ENCODE measurements at regions of chr14 and their contacts with region 1.

Region 1: DNA sequence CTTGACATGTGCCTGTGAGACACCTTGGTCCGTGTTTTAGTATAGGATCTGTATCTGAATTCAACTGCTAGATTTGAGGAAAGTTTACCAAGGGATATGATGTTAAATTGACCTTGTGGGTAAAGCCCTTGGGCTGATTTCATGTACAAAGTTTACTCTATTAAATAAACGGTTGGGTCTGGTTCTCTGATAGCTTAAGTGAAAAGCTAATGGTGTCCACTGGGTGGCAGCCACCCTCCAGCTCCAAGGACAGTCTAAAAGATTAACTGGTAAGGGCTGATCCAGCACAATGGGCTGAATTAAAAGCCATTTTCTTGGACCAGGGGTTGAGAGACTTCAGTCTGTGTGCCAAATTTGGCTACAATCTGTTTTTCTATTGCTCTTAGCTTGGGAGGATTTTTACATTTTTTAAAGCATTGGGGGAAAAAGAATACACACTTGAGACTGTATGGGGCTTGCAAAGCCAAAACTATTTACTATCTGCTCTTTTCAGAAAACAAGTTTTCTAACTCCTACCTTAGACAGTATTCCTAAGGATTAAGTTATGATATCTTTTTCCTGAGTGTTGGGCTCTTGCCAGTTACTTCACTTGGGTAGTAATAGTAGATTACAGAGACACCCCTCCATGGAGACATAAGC is 116.5 kb downstream of the GPHN start:
- DNase-seq: peak; percentile 42
- H3K4me3 ChIP-seq: no peak overlapping the region
- H3K27ac ChIP-seq: no peak overlapping the region
- H3K27me3 ChIP-seq: no peaks in the 10 kb centered on the region
- CTCF ChIP-seq: peak; percentile 80

Region 2: GRCh38 chr14:66638689-66639088 is 14.3 kb after region 1 on chr14:
- CTCF ChIA-PET with region 1: interaction called, 18 read pairs
- POLR2A ChIA-PET with region 1: no interaction called
- DNase-seq: no peak
- H3K4me3 ChIP-seq: no peak overlapping the region
- H3K27ac ChIP-seq: no peak overlapping the region
- H3K27me3 ChIP-seq: no peaks in the 10 kb centered on the region
- CTCF ChIP-seq: no peak

Region 3: DNA sequence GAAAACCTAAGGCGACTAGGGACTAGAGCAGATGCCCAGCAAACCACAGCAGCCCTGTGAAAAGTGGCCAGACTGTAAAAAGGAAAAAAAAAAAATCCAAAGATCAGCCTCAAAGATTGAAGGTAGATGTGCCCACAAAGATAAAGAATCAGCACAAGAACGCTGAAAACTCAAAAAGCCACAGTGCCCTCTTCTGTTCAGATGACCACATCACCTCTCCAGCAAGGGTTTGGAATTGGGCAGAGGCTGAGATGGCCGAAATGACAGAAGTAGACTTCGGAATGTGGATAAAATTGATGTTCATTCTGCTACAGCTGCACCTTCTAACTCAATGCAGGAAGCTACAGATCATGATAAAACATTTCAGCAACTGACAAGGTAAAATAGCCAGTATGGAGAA is 38.0 kb after region 1 on chr14:
- CTCF ChIA-PET with region 1: interaction called, 37 read pairs
- POLR2A ChIA-PET with region 1: no interaction called
- DNase-seq: no peak
- H3K4me3 ChIP-seq: no peak overlapping the region
- H3K27ac ChIP-seq: no peak overlapping the region
- H3K27me3 ChIP-seq: no peaks in the 10 kb centered on the region
- CTCF ChIP-seq: peak; percentile 56

Region 4: GRCh38 chr14:66746316-66747006 is 122.0 kb after region 1 on chr14:
- CTCF ChIA-PET with region 1: interaction called, 21 read pairs
- POLR2A ChIA-PET with region 1: no interaction called
- DNase-seq: peak; percentile 1
- H3K4me3 ChIP-seq: no peak overlapping the region
- H3K27ac ChIP-seq: no peak overlapping the region
- H3K27me3 ChIP-seq: no peaks in the 10 kb centered on the region
- CTCF ChIP-seq: peak; percentile 74

Region 5: DNA sequence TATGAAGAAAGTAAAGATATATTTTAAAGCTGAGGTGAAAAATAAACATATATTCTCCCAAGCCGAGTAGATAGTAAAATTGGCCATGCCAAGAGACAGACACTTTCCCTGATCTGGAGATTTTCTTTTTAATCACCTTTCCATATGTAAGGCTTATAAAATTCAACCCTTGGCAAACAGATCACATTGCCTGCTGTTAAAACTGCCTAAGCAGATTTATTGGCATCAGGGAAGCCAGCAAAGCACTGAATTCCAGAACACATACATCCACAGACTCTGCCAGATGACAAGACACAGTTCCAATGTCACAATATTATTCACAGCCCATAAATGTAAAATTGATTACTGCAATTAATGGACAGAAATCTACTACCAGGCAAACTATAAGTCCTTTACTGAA is 486.6 kb after region 1 on chr14:
- CTCF ChIA-PET with region 1: interaction called, 26 read pairs
- POLR2A ChIA-PET with region 1: no interaction called
- DNase-seq: no peak
- H3K4me3 ChIP-seq: no peak overlapping the region
- H3K27ac ChIP-seq: no peak overlapping the region
- H3K27me3 ChIP-seq: no peaks in the 10 kb centered on the region
- CTCF ChIP-seq: no peak

Region 6: DNA sequence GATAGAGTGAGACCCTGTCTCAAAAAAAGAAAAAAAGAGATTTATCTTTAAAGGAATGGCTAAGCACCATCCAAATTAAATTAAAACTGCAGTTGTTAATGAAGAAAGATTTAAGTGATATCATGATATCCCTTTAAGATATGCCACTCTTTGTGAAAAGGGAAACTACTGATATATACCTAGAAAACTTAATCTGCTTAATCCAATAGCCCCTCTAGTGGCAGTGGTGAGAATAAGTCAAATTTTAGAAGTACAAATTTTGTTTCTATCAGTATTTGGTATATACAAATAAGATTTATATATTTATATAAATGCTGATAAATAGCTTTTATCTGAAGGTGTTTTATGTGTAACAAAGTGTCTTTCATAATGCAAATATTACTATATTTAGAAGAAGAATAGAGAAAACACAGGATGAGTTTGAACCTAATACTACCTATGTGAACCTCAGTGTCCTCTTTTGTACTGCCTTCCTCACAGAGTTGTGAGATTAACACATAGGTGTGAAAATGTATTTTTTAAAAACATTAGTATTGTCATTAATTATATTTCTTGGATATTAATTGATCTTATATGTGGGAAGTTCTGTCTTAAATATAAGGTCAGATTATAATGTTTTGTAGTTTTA is 513.4 kb after region 1 on chr14:
- CTCF ChIA-PET with region 1: interaction called, 10 read pairs
- POLR2A ChIA-PET with region 1: no interaction called
- DNase-seq: no peak
- H3K4me3 ChIP-seq: no peak overlapping the region
- H3K27ac ChIP-seq: no peak overlapping the region
- H3K27me3 ChIP-seq: no peaks in the 10 kb centered on the region
- CTCF ChIP-seq: peak; percentile 72